HepG2 (cell line): ENCODE measurements at regions of chr4 and their contacts with region 1.

Region 1: DNA sequence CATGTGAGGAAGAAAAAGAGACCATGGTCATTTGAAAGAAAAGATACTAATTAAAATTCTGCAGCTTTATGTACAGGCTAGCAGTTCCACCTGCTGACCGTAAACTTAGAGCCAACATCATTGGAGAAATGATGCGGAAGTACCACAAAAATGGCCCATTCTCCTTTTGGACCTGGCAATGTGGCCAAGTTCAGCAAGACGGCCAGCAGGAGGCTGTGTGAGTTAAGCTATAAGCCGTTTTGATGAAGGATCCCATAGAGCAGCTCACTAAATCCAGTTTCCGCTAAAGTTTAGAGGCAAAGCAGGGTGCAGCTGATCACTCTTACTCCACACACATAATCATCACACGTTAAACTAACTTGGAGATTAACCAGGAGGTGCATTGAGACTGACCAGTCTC is 133.8 kb downstream of the LDB2 start:
- DNase-seq: peak; percentile 9
- ATAC-seq: peak; percentile 81
- H3K4me3 ChIP-seq: no peak overlapping the region
- H3K27ac ChIP-seq: no peak overlapping the region
- H3K4me1 ChIP-seq: no peaks in the 10 kb centered on the region
- H3K27me3 ChIP-seq: no peaks in the 10 kb centered on the region; a peak in 1 of 5 replicates
- CTCF ChIP-seq: peak; percentile 62
- EP300 ChIP-seq: no peak
- POLR2A ChIP-seq: no peak
- RAD21 ChIP-seq: no peak

Region 2: GRCh38 chr4:16843831-16844508 is 79.3 kb after region 1 on chr4:
- CTCF ChIA-PET with region 1: no interaction called
- POLR2A ChIA-PET with region 1: no interaction called
- in situ Hi-C with region 1: no loop called
- intact Hi-C with region 1: loop called (anchors 1 kb)
- DNase-seq: peak; percentile 20
- ATAC-seq: no peak; the same call in 2 of the 3 replicates
- H3K4me3 ChIP-seq: peak overlapping the region in 1 of 3 experiments; percentile 45; a peak in 2 of 6 replicates
- H3K27ac ChIP-seq: no peak overlapping the region
- H3K4me1 ChIP-seq: peaks cover 31% of the 10 kb centered on the region
- H3K27me3 ChIP-seq: no peaks in the 10 kb centered on the region
- CTCF ChIP-seq: no peak
- EP300 ChIP-seq: 0 out of 4 replicates have a peak, but pooled peaks of 1 of the 2 experiments have one; percentile 22
- POLR2A ChIP-seq: no peak
- RAD21 ChIP-seq: no peak

Region 3: DNA sequence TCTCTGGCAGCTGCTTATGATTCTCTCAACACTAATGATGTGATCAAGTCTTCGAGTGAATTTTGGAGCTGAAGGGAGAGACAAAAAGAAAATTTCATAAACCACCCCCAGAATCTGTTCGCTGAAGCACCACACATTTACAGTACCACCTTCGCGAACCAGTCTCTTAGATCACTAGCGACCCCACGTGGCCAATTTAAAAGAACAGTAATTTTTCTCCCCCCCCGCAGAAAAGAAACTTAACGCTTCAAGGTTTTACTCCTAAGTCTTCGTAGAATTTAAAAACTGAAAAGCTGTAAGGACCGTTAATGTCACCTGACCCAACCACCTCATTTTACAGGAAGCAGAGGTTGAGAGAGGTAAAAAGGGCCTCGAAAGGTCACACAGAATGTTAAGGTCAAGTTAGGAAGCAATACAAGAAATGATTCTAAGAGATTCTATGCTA is 559.8 kb after region 1 on chr4:
- CTCF ChIA-PET with region 1: interaction called, 5 read pairs
- POLR2A ChIA-PET with region 1: no interaction called
- in situ Hi-C with region 1: no loop called
- intact Hi-C with region 1: loop called (anchors 1 kb)
- DNase-seq: peak; percentile 12
- ATAC-seq: peak; percentile 48; the same call in 2 of the 3 replicates
- H3K4me3 ChIP-seq: no peak overlapping the region
- H3K27ac ChIP-seq: no peak overlapping the region
- H3K4me1 ChIP-seq: no peaks in the 10 kb centered on the region
- H3K27me3 ChIP-seq: peaks cover 0 to 7% of the 10 kb centered on the region in 2 experiments; a peak in 1 of 5 replicates
- CTCF ChIP-seq: peak; percentile 60
- EP300 ChIP-seq: no peak
- POLR2A ChIP-seq: no peak
- RAD21 ChIP-seq: peak; percentile 31; the same call in 1 of the 2 replicates